Posterior vena cava (tissue), 2 donors: ENCODE measurements at regions of chr3 and their contacts with region 1.

Region 1: DNA sequence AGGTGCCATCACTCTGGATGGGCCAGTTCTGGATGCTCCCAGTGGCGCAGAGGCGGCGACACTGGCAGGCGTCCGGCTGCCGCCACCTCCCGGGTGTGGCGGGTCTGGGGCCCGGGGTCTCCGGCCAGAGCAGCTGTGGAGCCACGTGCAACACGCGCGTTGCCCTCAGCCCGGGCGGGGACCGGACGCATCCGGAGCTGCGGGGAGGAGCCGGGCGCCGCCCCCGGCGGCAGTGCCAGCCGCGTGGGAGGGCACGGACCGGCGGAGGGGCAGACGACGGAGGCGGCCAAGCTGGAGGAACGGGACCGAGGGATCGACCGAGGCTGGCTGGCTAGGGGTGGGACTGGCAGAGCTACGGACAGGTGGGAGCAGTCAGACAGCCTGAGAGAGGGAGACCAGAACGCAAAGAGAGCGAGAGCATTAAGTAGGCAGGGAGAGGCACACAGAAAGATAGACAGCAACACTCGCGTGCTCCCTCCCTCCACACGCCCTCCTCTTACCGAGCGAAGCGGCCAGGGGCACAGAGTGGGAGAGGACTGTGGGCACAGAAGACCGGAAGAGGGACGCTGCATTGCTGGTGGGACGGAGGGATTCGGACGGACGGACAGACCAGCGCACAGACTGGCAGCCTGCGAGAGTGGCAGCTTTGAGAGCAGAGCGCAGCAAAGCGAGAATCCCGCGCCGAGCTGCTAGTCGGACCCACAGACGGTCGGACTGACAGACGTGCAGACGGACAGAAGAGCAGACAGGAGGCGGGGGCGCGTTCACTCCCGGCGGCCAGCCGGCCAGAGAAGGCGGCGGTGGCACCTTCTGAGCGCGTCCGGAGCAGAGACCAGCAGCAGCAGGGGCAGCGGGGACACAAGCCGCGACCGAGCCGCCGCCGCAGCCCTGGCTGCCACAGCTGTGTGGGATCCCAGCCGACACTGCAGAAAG is at the start of gene ARPP21:
- DNase-seq: no peak
- total RNA-seq, gene ARPP21: not detected

Region 2: DNA sequence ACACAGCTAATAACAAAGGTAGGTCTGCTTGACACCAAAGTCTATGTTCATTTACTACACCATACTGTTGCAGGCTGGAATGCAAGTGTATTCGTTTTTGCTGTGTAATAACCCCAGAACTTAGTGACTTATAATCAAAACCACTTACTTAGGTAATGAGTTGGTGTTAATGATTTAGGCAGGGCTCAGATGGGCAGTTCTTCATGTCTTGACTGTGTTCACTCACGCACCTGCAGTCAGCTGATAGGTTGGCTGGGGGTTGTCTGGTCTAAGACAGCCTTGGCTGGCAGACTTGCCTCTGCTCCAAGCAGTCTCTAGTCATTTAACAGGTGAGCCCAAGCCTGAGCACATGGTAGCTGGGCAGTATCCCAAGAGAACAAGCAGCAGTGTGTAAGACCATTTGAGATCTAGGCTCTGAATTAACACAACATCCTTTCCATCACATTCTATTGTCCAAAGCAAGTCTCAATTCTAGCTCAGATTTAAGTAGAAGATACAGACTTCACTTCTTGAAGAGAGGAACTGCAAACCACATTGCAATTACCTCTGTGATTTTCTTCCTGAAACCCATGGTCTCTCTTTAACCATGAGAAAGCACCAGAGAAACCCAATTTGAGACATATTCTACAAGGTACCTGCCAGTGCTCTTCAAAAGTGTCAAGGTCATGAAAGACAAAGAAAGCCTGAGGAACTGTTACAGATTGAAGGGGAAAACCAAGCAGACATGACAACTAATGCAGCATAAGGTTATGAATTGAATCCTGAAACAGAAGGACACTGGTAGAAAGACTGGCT is 1138.1 kb after region 1 on chr3:
- intact Hi-C with region 1: loop called in 1 of 2 experiments (anchors 10 kb)
- DNase-seq: no peak